Psoas muscle (tissue), 8 donors: ENCODE measurements at regions of chr3 and their contacts with region 1.

Region 1: DNA sequence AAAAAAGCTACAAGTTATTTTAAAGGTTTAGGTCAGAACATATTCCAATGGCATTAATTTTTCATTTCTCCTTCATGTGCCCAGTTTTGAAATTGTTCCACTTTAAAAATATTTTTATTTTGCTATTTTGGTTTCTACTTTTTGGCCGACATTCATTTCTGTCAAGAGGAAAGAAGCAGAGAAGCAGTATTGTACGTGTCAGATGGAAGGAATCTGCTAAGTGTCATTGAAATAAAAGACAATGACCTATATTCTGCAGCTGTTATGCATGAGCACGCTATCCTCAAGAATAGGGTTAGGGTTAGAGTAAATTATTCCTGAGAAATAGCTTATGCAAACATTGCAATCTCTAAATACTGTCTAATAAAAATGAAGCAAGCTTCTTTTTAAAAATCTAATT is 941.7 kb downstream of the TUSC7 start:
- DNase-seq: no peak
- ATAC-seq: no peak
- H3K4me3 ChIP-seq: no peak overlapping the region
- H3K27ac ChIP-seq: no peak overlapping the region
- H3K4me1 ChIP-seq: no peaks in the 10 kb centered on the region
- H3K27me3 ChIP-seq: no peaks in the 10 kb centered on the region
- CTCF ChIP-seq: no peak

Region 2: GRCh38 chr3:117633207-117633606 is 18.0 kb before region 1 on chr3:
- intact Hi-C with region 1: loop called in 1 of 2 experiments (anchors 2 kb)
- DNase-seq: no peak
- ATAC-seq: no peak
- H3K4me3 ChIP-seq: no peak overlapping the region
- H3K27ac ChIP-seq: no peak overlapping the region
- H3K4me1 ChIP-seq: no peaks in the 10 kb centered on the region
- H3K27me3 ChIP-seq: no peaks in the 10 kb centered on the region
- CTCF ChIP-seq: no peak